ENCODE measurements at regions of chr2 and their contacts with region 1.

Region 1: DNA sequence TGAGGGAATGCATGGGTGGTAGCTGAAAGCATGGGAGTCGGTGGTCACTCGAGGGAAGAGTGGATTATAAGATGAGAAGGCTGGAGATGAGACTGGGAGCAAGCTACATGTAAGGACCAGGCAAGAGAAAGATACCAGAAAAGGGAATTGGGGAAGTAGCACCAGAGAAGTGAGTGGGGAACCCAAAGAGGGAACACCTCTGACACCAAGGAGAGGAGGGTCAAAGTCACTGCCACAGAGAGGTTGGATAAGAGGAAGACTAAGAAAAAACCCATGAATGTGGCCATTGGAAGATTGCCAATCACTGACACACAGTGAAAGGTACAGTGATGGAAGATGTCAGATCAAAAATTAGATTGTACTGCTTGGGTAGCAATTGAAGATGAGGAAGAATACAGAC is 473.9 kb downstream of the BCL11A start:
- DNase-seq: no peak

Region 2: GRCh38 chr2:60104514-60105505 is 25.2 kb after region 1 on chr2:
- intact Hi-C with region 1: loop called (anchors 1 kb)
- DNase-seq: no peak

Measured in posterior cingulate gyrus (tissue), 11 donors.